Esophagus muscularis mucosa (tissue), 4 donors: ENCODE measurements at regions of chr7 and their contacts with region 1.

Region 1: DNA sequence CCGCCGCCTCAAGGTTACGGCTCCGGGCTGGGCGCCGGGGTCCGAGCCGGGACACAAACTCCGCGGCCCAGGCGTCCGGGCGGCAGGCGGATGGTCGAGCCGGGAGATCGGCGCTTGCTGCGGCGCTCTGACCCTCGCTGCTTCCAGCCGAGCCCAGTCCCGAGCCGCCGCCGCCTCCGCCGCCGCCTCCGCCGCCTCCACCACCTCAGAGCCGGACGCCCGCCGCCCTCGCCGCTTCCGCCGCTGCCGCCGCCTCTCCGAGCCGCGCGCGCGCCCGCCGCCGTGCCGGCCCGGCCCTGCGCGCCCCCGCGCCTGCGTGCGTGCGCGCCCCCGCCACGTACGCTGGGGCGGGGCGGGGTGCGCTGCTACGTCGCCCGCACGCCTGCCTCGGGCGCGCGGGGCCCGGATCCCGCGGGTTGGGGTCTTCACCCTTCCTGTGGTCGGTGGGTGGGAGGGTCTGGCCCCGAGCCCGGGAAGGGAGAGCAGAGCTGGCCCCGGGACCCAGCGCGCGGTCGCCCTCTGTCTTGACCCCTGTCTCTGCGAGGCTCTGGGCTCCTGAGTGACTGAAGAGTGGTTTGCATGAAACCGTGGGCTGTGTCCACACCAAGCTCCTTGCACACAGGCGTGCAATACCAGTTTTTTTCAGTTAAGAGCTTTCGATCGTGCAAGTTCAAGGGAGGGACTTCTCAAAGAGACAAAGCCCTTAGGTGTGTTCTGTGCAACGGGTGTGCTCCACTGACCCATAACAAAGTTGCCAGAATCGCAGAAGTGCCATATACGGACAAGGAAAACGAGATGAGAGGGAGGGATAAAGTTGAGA is at the start of gene SMURF1:
- DNase-seq: no peak
- H3K4me3 ChIP-seq: peak within 1 kb of the TSS; percentile 80 to 99 (median 94)
- H3K27ac ChIP-seq: peak within 1 kb of the TSS; percentile 97 to 100 (median 99)
- H3K4me1 ChIP-seq: peaks cover 29 to 48% (median 45%) of the 10 kb centered on the region in 4 donors
- H3K27me3 ChIP-seq: no peaks in the 10 kb centered on the region
- CTCF ChIP-seq: no peak
- EP300 ChIP-seq: no peak
- POLR2A ChIP-seq: no peak
- total RNA-seq, gene SMURF1: 19.1 to 27.4 (median 23.9) TPM

Region 2: GRCh38 chr7:99040104-99040958 is 103.7 kb before region 1 on chr7:
- intact Hi-C with region 1: loop called (anchors 5 kb)
- DNase-seq: peak; percentile 96
- H3K4me3 ChIP-seq: no peak overlapping the region
- H3K27ac ChIP-seq: peak overlapping the region; percentile 38 to 72 (median 60)
- H3K4me1 ChIP-seq: peaks cover 5 to 49% (median 28%) of the 10 kb centered on the region in 4 donors
- H3K27me3 ChIP-seq: no peaks in the 10 kb centered on the region
- CTCF ChIP-seq: peak; percentile 71 to 80 (median 80)
- EP300 ChIP-seq: no peak
- POLR2A ChIP-seq: no peak

Region 3: GRCh38 chr7:99171731-99172130 is 27.7 kb after region 1 on chr7:
- intact Hi-C with region 1: no loop called
- DNase-seq: no peak
- H3K4me3 ChIP-seq: no peak overlapping the region
- H3K27ac ChIP-seq: no peak overlapping the region
- H3K4me1 ChIP-seq: no peaks in the 10 kb centered on the region
- H3K27me3 ChIP-seq: peaks cover 0 to 6% (median 0%) of the 10 kb centered on the region in 4 donors
- CTCF ChIP-seq: no peak
- EP300 ChIP-seq: no peak
- POLR2A ChIP-seq: no peak

Region 4: DNA sequence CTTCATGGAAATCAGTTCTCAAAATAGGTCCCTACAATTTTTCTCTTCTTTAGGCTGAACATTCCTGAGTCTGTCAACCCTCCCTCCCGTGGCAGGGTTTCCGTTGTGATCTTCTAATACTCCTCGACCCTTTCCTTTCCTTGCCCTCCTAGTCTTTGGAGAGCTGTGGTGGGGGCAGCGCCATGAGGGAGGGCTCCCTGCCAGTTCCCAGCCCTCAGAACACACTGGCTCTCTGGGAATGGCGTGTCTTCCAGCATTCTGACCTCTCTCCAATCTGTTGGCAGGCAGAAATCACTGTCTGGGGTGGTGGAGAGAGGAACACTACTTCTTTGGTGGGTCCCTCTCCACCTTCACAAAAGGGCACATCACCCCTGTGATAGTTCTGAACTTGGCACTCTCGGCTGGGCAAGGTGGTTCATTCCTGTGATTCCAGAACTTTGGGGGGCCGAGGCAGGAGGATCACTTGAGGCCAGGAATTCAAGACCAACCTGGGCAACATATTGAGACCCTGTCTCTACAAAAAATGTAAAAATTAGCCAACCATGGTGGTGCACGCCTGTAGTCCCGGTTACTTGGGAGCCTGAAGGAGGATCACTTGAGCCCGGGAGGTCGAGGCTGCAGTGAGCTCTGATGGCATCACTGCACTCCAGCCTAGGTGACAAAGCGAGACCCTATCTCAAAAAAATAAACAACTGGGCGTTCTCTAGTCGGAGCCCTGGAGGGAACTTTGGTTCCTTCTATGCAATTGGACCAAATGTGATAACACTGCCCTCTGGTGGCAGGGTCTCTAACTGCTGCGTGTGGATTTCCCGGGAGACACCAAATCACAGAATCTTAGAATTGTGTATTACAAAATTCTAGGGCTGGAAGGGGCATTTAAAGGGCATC is 168.5 kb after region 1 on chr7:
- intact Hi-C with region 1: loop called (anchors 5 kb)
- DNase-seq: peak; percentile 94
- H3K4me3 ChIP-seq: no peak overlapping the region
- H3K27ac ChIP-seq: no peak overlapping the region
- H3K4me1 ChIP-seq: peaks cover 0 to 8% (median 7%) of the 10 kb centered on the region in 4 donors
- H3K27me3 ChIP-seq: no peaks in the 10 kb centered on the region
- CTCF ChIP-seq: peak; percentile 84 to 94 (median 91)
- EP300 ChIP-seq: no peak
- POLR2A ChIP-seq: no peak